ENCODE measurements at regions of chr12 and their contacts with region 1.

Region 1: DNA sequence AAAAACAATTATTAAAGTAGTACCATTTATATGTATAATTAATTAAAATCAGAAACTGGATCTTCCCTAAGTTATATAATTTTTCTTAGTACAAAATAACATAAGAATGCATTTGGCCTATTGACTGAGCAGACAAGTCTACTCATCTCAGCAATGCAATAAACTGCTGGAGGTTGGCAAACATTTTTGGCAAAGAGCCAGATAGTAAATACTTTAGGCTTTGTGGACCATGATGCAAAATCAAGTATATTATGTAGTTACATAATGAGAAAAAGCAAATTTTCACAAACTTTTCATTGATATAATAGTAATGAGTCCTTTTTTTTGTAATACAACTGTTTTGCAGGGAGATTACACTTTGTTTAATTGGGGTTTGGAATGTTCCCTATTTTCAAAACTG is 30.9 kb downstream of the ERGIC2 start:
- DNase-seq: no peak
- H3K4me3 Mint-ChIP-seq: no peak overlapping the region
- H3K27ac Mint-ChIP-seq: no peak overlapping the region
- H3K4me1 Mint-ChIP-seq: no peaks in the 10 kb centered on the region
- H3K27me3 Mint-ChIP-seq: no peaks in the 10 kb centered on the region
- CTCF ChIP-seq: no peak

Region 2: GRCh38 chr12:28424965-28425364 is 925.1 kb before region 1 on chr12:
- CTCF ChIA-PET with region 1: no interaction called
- intact Hi-C with region 1: no loop called
- DNase-seq: peak; percentile 54
- H3K4me3 Mint-ChIP-seq: peak overlapping the region; percentile 61
- H3K27ac Mint-ChIP-seq: peak overlapping the region; percentile 89
- H3K4me1 Mint-ChIP-seq: peaks cover 34% of the 10 kb centered on the region
- H3K27me3 Mint-ChIP-seq: no peaks in the 10 kb centered on the region
- CTCF ChIP-seq: no peak

Region 3: DNA sequence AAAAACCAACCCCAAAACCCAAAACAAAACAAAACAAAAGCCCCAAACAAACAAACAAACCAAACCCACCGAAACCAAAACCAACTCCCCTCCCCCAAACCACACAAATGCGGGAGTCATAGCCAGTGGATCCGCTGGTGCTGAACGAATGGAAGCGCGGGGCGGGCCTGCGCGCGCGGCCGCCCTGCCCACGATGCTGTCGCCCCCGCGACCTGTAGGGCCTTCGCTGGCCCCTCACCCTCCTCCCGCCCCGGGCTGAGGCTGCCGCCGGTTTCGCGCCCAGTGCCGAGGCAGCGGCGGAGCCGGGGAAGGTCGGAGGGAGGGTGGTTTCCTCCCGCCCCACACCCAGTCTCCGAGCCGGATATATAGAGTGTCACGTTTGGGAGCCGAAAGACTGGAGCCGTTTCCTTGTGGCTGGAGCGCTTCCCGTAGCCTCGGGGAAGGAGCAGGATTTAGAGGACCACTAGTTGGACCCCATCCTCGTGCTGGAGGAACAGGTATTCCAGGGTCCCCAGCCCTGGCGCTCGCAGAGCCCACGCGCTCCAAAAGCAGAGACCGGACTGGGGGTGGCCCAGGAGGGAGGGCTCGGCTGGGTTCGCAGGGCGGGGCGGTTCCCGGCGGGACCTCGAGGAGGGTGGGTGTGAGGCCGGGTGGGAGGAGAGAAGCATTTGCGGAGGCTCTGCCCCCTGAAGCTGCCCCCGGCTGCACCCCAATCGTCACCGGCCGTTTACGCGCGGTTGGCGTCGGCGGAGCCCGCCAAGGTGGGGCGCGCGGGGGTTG is 201.0 kb before region 1 on chr12 and contains the start of gene FAR2:
- CTCF ChIA-PET with region 1: no interaction called
- intact Hi-C with region 1: no loop called
- DNase-seq: peak; percentile 76
- H3K4me3 Mint-ChIP-seq: peak within 1 kb of the TSS; percentile 98
- H3K27ac Mint-ChIP-seq: peak within 1 kb of the TSS; percentile 99
- H3K4me1 Mint-ChIP-seq: peaks cover 12% of the 10 kb centered on the region
- H3K27me3 Mint-ChIP-seq: no peaks in the 10 kb centered on the region
- CTCF ChIP-seq: no peak
- total RNA-seq, gene FAR2: 20.8 and 24.0 TPM in 2 replicates

Region 4: GRCh38 chr12:29414368-29414767 is 64.3 kb after region 1 on chr12:
- CTCF ChIA-PET with region 1: no interaction called
- intact Hi-C with region 1: loop called (anchors 10 kb)
- DNase-seq: no peak
- H3K4me3 Mint-ChIP-seq: no peak overlapping the region
- H3K27ac Mint-ChIP-seq: no peak overlapping the region
- H3K4me1 Mint-ChIP-seq: no peaks in the 10 kb centered on the region
- H3K27me3 Mint-ChIP-seq: peaks cover 26% of the 10 kb centered on the region
- CTCF ChIP-seq: no peak

Region 5: GRCh38 chr12:29519585-29520182 is 169.6 kb after region 1 on chr12:
- CTCF ChIA-PET with region 1: no interaction called
- intact Hi-C with region 1: no loop called
- DNase-seq: peak; percentile 42
- H3K4me3 Mint-ChIP-seq: no peak overlapping the region
- H3K27ac Mint-ChIP-seq: no peak overlapping the region
- H3K4me1 Mint-ChIP-seq: no peaks in the 10 kb centered on the region
- H3K27me3 Mint-ChIP-seq: no peaks in the 10 kb centered on the region
- CTCF ChIP-seq: peak; percentile 28